ENCODE measurements at regions of chr5 and their contacts with region 1.

Region 1: GRCh38 chr5:177071666-177072385 is 14.9 kb upstream of the FGFR4 start:
- DNase-seq: peak; percentile 47 to 68 (median 58)
- H3K4me3 ChIP-seq: no peak overlapping the region
- H3K4me3 Mint-ChIP-seq: peak overlapping the region in 1 of 8 donors; percentile 27
- H3K27ac ChIP-seq: no peak overlapping the region
- H3K27ac Mint-ChIP-seq: peak overlapping the region in 4 of 7 donors; percentile 5 to 68 (median 30)
- H3K4me1 ChIP-seq: no peaks in the 10 kb centered on the region
- H3K4me1 Mint-ChIP-seq: peaks cover 4 to 5% (median 4%) of the 10 kb centered on the region in 4 donors
- H3K27me3 ChIP-seq: no peaks in the 10 kb centered on the region
- H3K27me3 Mint-ChIP-seq: no peaks in the 10 kb centered on the region

Region 2: DNA sequence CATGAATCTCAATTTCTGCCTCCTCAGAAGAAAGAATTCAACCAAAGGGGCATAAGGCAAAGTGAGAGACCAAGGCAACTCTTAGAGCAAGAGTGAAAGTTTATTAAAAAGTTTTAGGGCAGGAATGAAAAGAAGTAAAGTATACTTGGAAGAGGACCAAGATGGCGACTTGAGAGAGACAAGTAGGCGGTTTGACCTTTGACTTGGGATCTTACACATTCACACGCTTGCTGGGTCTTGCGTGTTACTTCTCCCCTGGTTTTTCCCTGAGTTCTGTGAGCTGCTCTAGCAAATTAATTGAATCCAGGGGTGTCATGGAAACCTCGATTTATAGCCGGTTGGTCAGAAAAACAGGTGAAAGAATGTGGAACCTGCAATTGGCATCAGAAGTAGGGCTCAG is 42.3 kb before region 1 on chr5:
- CTCF ChIA-PET with region 1: interaction called, 10 read pairs
- POLR2A ChIA-PET with region 1: no interaction called
- intact Hi-C with region 1: no loop called
- DNase-seq: no peak
- H3K4me3 ChIP-seq: no peak overlapping the region
- H3K4me3 Mint-ChIP-seq: no peak overlapping the region
- H3K27ac ChIP-seq: no peak overlapping the region
- H3K27ac Mint-ChIP-seq: no peak overlapping the region
- H3K4me1 ChIP-seq: peaks cover 12% of the 10 kb centered on the region
- H3K4me1 Mint-ChIP-seq: peaks cover 18 to 38% (median 22%) of the 10 kb centered on the region in 4 donors
- H3K27me3 ChIP-seq: no peaks in the 10 kb centered on the region
- H3K27me3 Mint-ChIP-seq: no peaks in the 10 kb centered on the region

Region 3: GRCh38 chr5:177086924-177087706 is 15.3 kb after region 1 on chr5:
- CTCF ChIA-PET with region 1: interaction called, 86 read pairs
- POLR2A ChIA-PET with region 1: interaction called, 5 read pairs
- intact Hi-C with region 1: no loop called
- DNase-seq: peak; percentile 67 to 77 (median 75)
- H3K4me3 ChIP-seq: peak overlapping the region in 1 of 2 donors; percentile 50
- H3K4me3 Mint-ChIP-seq: peak overlapping the region in 2 of 8 donors; percentile 24 to 62
- H3K27ac ChIP-seq: no peak overlapping the region
- H3K27ac Mint-ChIP-seq: peak overlapping the region in 1 of 7 donors; percentile 47
- H3K4me1 ChIP-seq: peaks cover 8% of the 10 kb centered on the region
- H3K4me1 Mint-ChIP-seq: peaks cover 5 to 12% (median 6%) of the 10 kb centered on the region in 4 donors
- H3K27me3 ChIP-seq: no peaks in the 10 kb centered on the region
- H3K27me3 Mint-ChIP-seq: peaks cover 3 to 13% of the 10 kb centered on the region in 2 donors

Region 4: DNA sequence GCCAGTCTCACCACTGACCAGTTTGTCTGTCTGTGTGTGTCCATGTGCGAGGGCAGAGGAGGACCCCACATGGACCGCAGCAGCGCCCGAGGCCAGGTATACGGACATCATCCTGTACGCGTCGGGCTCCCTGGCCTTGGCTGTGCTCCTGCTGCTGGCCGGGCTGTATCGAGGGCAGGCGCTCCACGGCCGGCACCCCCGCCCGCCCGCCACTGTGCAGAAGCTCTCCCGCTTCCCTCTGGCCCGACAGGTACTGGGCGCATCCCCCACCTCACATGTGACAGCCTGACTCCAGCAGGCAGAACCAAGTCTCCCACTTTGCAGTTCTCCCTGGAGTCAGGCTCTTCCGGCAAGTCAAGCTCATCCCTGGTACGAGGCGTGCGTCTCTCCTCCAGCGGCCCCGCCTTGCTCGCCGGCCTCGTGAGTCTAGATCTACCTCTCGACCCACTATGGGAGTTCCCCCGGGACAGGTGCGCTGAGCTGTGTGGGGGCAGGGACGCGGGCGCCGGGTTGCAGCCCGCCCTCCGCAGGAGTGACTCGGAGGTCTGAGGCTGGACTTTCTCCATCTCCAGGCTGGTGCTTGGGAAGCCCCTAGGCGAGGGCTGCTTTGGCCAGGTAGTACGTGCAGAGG is 21.4 kb after region 1 on chr5:
- CTCF ChIA-PET with region 1: interaction called, 86 read pairs
- POLR2A ChIA-PET with region 1: no interaction called
- intact Hi-C with region 1: no loop called
- DNase-seq: no peak
- H3K4me3 ChIP-seq: no peak overlapping the region
- H3K4me3 Mint-ChIP-seq: no peak overlapping the region
- H3K27ac ChIP-seq: no peak overlapping the region
- H3K27ac Mint-ChIP-seq: no peak overlapping the region
- H3K4me1 ChIP-seq: no peaks in the 10 kb centered on the region
- H3K4me1 Mint-ChIP-seq: no peaks in the 10 kb centered on the region
- H3K27me3 ChIP-seq: no peaks in the 10 kb centered on the region
- H3K27me3 Mint-ChIP-seq: peaks cover 0 to 8% of the 10 kb centered on the region in 2 donors